Heart right ventricle (tissue), 16 donors: ENCODE measurements at regions of chr3 and their contacts with region 1.

Region 1: DNA sequence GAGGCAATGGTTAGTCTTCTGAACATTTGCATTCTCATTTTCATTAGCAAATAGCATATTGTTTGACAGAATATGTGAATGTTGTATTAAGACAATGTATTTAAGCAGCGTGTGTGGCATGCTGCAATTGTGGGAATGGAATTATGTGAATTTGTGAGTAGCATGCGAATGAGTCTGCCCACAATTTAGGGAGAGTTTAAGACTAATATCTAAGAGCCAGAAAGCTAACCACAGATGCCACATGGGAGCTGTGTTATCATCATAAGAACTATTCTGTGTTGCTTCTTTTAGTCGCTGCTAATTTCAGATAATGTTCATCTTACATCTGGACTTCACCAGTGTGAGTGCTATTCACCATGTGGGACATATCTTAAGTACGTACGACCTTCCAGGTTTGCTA is 494.5 kb downstream of the RBMS3 start:
- DNase-seq: no peak
- ATAC-seq: peak in 1 of 8 donors; percentile 39
- H3K4me3 ChIP-seq: no peak overlapping the region
- H3K27ac ChIP-seq: no peak overlapping the region
- H3K4me1 ChIP-seq: peaks cover 0 to 10% (median 0%) of the 10 kb centered on the region in 9 donors
- H3K27me3 ChIP-seq: no peaks in the 10 kb centered on the region
- CTCF ChIP-seq: no peak

Region 2: DNA sequence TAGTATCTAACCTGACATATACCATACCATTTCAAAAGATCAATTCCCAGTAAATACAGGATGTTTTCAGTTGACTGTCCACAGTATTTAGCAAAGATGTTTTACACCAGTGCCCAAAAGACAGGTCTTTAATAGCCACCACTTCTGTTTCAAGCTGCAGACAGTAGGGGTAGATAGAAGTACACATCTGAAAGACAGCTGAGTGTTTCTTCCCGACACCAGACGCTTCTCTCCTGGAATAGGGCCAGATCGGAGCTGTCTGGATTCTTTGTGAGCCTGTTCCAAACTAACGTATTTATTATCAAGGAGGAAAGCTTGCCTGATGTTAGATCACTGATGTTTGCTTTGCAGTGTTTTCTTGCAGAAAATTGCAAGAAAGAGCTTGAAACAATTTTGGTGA is 630.5 kb before region 1 on chr3:
- intact Hi-C with region 1: loop called in 1 of 10 experiments (anchors 5 kb)
- DNase-seq: peak; percentile 10 to 62
- ATAC-seq: peak in 7 of 8 donors; percentile 68 to 85 (median 75)
- H3K4me3 ChIP-seq: no peak overlapping the region
- H3K27ac ChIP-seq: no peak overlapping the region
- H3K4me1 ChIP-seq: peaks cover 0 to 32% (median 19%) of the 10 kb centered on the region in 9 donors
- H3K27me3 ChIP-seq: no peaks in the 10 kb centered on the region
- CTCF ChIP-seq: peak in 8 of 9 donors; percentile 10 to 66 (median 43)

Region 3: DNA sequence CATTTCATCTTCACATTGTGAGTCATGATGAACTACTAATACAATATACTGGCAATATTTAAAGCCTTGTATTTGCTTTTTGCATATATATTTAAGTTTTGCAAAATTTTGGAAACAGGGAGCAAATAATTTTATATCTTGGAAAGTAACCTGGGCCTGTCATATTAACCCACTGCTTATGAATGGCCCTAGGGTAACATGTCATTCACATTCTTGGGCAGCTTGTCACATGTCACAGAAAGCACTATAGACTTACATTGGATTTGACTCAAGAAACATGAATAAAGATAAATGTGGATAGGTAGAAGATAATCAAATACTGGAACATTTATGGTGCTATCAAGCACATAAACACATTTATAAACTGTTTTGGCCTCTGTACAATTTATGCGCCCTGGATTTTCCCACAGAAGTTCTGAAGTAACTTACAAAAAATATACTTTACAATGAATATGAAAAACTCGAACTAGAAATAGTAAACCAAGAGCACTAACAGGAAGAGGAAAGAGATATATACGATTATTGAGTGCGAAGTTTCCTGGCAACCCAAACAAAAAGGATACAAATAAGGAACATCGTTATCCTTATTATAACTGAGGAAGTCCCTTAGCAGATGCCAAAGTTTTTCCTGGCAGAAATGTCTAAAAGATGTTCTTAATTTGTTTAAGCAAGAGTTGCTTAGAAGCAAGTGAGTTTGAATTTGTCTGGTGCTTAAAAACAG is 237.3 kb before region 1 on chr3:
- intact Hi-C with region 1: no loop called
- DNase-seq: no peak
- ATAC-seq: peak in 4 of 8 donors; percentile 16 to 47 (median 31)
- H3K4me3 ChIP-seq: no peak overlapping the region
- H3K27ac ChIP-seq: peak overlapping the region in 6 of 10 donors; percentile 2 to 35 (median 16)
- H3K4me1 ChIP-seq: peaks cover 5 to 57% (median 23%) of the 10 kb centered on the region in 9 donors
- H3K27me3 ChIP-seq: no peaks in the 10 kb centered on the region
- CTCF ChIP-seq: no peak